Activated CD8-positive, alpha-beta T cell treated with anti-CD3 and anti-CD28 coated beads, Interleukin-2, amount 10 ng/mL, durations not matched to agents 7 days and 5 days (primary cell): ENCODE measurements at regions of chr9 and their contacts with region 1.

Region 1: DNA sequence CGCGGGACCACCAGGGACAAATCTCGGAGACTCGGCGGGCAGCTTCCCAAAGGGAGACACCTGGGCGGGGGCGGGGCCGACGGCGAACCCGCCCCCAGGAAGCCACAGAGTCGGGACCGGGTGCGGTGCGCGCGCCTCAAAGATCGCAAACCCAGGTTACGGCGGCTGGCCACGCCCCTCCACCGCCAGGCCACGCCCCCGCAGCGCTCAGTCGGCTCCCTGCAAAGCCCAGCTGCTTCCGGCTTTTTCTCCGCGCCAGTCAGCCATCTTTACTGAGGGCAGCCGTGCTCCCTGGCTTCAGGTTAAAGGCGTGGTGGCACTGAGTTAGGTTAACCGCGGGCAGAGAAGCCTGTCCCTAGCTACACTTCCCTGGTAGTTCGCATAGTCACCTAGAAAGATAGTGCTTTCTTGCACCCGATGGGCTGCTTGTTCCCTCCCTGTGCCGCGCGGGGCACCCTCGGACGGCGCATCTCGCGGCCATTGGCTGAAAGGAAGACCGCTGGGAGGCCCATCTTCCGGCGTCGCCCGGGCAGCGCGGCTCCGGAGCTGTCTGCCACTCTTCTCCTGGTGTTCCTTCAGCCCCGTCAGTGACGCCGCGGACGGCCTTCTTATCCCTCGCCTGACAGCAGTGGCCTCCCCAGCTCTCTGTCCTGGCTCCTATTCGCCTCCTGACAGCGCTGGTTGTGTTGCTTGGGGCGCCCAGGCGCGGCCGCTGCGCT is at the start of gene TBC1D2:
- DNase-seq: peak; percentile 98
- ATAC-seq: peak; percentile 86
- H3K4me3 Mint-ChIP-seq: peak within 1 kb of the TSS; percentile 79
- H3K27ac Mint-ChIP-seq: peak within 1 kb of the TSS; percentile 98
- H3K4me1 Mint-ChIP-seq: peaks cover 17% of the 10 kb centered on the region
- H3K27me3 Mint-ChIP-seq: peaks cover 13% of the 10 kb centered on the region
- total RNA-seq, gene TBC1D2: 3.0 to 3.5 TPM

Region 2: DNA sequence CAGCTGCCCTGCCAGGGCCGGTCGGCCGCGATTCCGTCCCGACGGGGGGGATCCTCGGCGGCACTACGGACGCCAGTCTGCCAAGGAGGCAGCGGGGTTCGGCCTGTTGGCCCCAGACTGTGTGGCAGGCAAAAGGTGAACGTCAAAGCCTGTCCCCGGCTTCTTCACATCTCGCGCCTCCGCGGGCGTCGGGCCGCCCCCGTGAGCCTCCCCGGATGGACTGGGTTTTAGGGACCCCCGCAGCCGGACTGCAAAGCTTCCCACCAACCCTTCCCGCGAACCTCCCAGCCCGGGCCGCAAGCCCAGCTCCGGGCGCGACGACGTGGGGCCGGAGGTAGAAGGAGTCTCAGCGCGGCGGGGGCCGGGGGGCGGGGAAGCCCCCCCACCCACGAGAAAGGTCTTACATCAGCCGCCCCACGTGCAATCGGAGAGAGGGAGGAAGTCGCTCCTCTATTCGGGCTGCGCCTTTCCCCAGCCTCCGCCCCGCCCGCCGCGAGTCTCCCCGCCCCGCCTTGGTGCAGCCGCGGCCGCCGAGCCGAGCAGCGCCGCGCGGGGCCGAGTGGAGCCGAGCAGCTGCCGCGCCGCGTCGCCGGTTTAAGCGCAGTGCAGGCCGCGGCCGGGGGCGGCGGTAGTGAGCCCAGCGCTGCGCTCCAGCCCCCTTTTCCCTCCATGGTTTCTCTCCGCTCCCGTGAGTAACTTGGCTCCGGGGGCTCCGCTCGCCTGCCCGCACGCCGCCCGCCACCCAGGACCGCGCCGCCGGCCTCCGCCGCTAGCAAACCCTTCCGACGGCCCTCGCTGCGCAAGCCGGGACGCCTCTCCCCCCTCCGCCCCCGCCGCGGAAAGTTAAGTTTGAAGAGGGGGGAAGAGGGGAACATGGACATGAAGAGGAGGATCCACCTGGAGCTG is 272.8 kb before region 1 on chr9 and contains the start of gene ANP32B:
- CTCF ChIA-PET with region 1: interaction called, 3 read pairs
- POLR2A ChIA-PET with region 1: interaction called, 12 read pairs
- DNase-seq: peak; percentile 95
- ATAC-seq: peak; percentile 83
- H3K4me3 Mint-ChIP-seq: peak within 1 kb of the TSS; percentile 84
- H3K27ac Mint-ChIP-seq: peak within 1 kb of the TSS; percentile 95
- H3K4me1 Mint-ChIP-seq: peaks cover 48% of the 10 kb centered on the region
- H3K27me3 Mint-ChIP-seq: no peaks in the 10 kb centered on the region
- total RNA-seq, gene ANP32B: 347 to 354 TPM

Region 3: GRCh38 chr9:98074115-98074990 is 181.4 kb before region 1 on chr9:
- CTCF ChIA-PET with region 1: interaction called, 27 read pairs
- POLR2A ChIA-PET with region 1: interaction called, 7 read pairs
- DNase-seq: peak; percentile 73
- ATAC-seq: peak; percentile 28
- H3K4me3 Mint-ChIP-seq: no peak overlapping the region
- H3K27ac Mint-ChIP-seq: peak overlapping the region; percentile 77
- H3K4me1 Mint-ChIP-seq: peaks cover 37% of the 10 kb centered on the region
- H3K27me3 Mint-ChIP-seq: no peaks in the 10 kb centered on the region

Region 4: GRCh38 chr9:98118640-98119601 is 136.8 kb before region 1 on chr9 and contains the start of gene TRIM14:
- CTCF ChIA-PET with region 1: interaction called, 39 read pairs
- POLR2A ChIA-PET with region 1: interaction called, 19 read pairs
- DNase-seq: peak; percentile 75
- ATAC-seq: peak; percentile 82
- H3K4me3 Mint-ChIP-seq: peak within 1 kb of the TSS; percentile 83
- H3K27ac Mint-ChIP-seq: peak within 1 kb of the TSS; percentile 92
- H3K4me1 Mint-ChIP-seq: peaks cover 44% of the 10 kb centered on the region
- H3K27me3 Mint-ChIP-seq: no peaks in the 10 kb centered on the region
- total RNA-seq, gene TRIM14: 85.2 to 90.5 TPM

Region 5: GRCh38 chr9:98207606-98208005 is 48.1 kb before region 1 on chr9:
- CTCF ChIA-PET with region 1: interaction called, 15 read pairs
- POLR2A ChIA-PET with region 1: interaction called, 3 read pairs
- DNase-seq: no peak
- ATAC-seq: no peak
- H3K4me3 Mint-ChIP-seq: no peak overlapping the region
- H3K27ac Mint-ChIP-seq: no peak overlapping the region
- H3K4me1 Mint-ChIP-seq: peaks cover 2% of the 10 kb centered on the region
- H3K27me3 Mint-ChIP-seq: no peaks in the 10 kb centered on the region

Region 6: GRCh38 chr9:98315551-98316060 is 59.9 kb after region 1 on chr9:
- CTCF ChIA-PET with region 1: no interaction called
- POLR2A ChIA-PET with region 1: no interaction called
- DNase-seq: peak; percentile 88
- ATAC-seq: peak; percentile 96
- H3K4me3 Mint-ChIP-seq: no peak overlapping the region
- H3K27ac Mint-ChIP-seq: no peak overlapping the region
- H3K4me1 Mint-ChIP-seq: no peaks in the 10 kb centered on the region
- H3K27me3 Mint-ChIP-seq: no peaks in the 10 kb centered on the region